GM12878 (cell line): ENCODE measurements at regions of chr12 and their contacts with region 1.

Region 1: DNA sequence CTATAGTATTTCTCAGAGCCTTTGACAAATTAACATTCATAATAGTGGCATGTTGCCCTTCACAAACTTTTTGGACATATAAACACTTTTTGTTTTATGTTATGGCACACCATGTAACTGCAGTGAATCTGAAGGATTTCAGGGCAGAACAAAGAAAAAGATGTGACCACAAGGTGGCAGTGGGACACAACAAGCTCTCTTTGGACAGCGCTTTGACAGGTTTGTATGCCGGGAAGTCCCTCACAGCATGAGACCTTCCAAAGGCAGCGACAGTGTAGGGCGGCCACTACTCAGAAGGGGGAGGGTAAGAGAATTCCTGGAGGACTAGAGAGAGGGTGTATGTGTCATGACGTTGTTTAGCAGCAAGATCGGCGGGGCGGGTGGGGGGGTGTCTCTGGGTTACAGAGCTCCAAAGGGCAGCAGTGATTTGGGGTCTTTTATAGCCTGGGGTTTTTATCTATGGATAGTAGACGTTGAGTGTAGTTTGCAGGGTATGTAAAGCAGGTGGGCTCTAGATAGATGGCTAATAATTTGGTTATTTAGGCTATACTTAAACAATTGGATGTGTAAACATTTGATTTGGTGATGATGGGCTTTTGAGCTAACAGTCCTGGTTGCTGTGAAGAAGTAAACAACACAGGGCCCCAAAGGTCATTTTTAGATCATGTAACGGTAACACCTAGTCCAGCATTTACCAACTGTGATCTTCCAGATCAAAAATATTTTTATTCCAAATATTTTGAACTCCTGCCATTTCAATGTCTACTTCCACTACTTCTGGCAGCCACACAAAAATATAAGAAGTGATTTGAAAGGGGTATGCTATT is 22.9 kb downstream of the ETFBKMT start:
- DNase-seq: peak; percentile 95
- ATAC-seq: peak; percentile 95
- H3K4me3 ChIP-seq: no peak overlapping the region
- H3K27ac ChIP-seq: no peak overlapping the region; the same call in 1 of the 2 replicates
- H3K4me1 ChIP-seq: peaks cover 3% of the 10 kb centered on the region; the same call in 1 of the 2 replicates
- H3K27me3 ChIP-seq: no peaks in the 10 kb centered on the region
- CTCF ChIP-seq: peak; percentile 77 to 93 (median 86)
- EP300 ChIP-seq: no peak
- POLR2A ChIP-seq: no peak
- RAD21 ChIP-seq: peak; percentile 100

Region 2: GRCh38 chr12:31527083-31527482 is 155.3 kb before region 1 on chr12:
- CTCF ChIA-PET with region 1: no interaction called
- POLR2A ChIA-PET with region 1: no interaction called
- RAD21 ChIA-PET with region 1: no interaction called
- SMC1A ChIA-PET with region 1: no interaction called
- in situ Hi-C with region 1: no loop called
- intact Hi-C with region 1: no loop called
- DNase-seq: no peak
- ATAC-seq: no peak
- H3K4me3 ChIP-seq: no peak overlapping the region
- H3K27ac ChIP-seq: no peak overlapping the region
- H3K4me1 ChIP-seq: peaks cover 27% of the 10 kb centered on the region
- H3K27me3 ChIP-seq: no peaks in the 10 kb centered on the region
- CTCF ChIP-seq: no peak
- EP300 ChIP-seq: no peak
- POLR2A ChIP-seq: no peak
- RAD21 ChIP-seq: no peak

Region 3: GRCh38 chr12:31715283-31715825 is 33.0 kb after region 1 on chr12:
- CTCF ChIA-PET with region 1: interaction called, 12 read pairs
- POLR2A ChIA-PET with region 1: interaction called, 3 read pairs
- RAD21 ChIA-PET with region 1: interaction called, 27 read pairs
- SMC1A ChIA-PET with region 1: interaction called, 20 read pairs
- in situ Hi-C with region 1: no loop called
- intact Hi-C with region 1: no loop called
- DNase-seq: peak; percentile 77
- ATAC-seq: peak; percentile 95
- H3K4me3 ChIP-seq: peak overlapping the region; percentile 54; the same call in 1 of the 2 replicates
- H3K27ac ChIP-seq: peak overlapping the region; percentile 90
- H3K4me1 ChIP-seq: peaks cover 10% of the 10 kb centered on the region
- H3K27me3 ChIP-seq: no peaks in the 10 kb centered on the region
- CTCF ChIP-seq: no peak
- EP300 ChIP-seq: peak in 1 of 2 experiments; percentile 35; a peak in 1 of 4 replicates
- POLR2A ChIP-seq: no peak
- RAD21 ChIP-seq: peak; percentile 13

Region 4: GRCh38 chr12:31742891-31743290 is 60.5 kb after region 1 on chr12:
- CTCF ChIA-PET with region 1: interaction called, 4 read pairs
- POLR2A ChIA-PET with region 1: interaction called, 4 read pairs
- RAD21 ChIA-PET with region 1: interaction called, 15 read pairs
- SMC1A ChIA-PET with region 1: interaction called, 7 read pairs
- in situ Hi-C with region 1: no loop called
- intact Hi-C with region 1: loop called (anchors 2 kb)
- DNase-seq: no peak
- ATAC-seq: no peak; the same call in 2 of the 3 replicates
- H3K4me3 ChIP-seq: no peak overlapping the region
- H3K27ac ChIP-seq: no peak overlapping the region
- H3K4me1 ChIP-seq: peaks cover 27% of the 10 kb centered on the region
- H3K27me3 ChIP-seq: no peaks in the 10 kb centered on the region
- CTCF ChIP-seq: no peak
- EP300 ChIP-seq: no peak
- POLR2A ChIP-seq: no peak
- RAD21 ChIP-seq: no peak

Region 5: DNA sequence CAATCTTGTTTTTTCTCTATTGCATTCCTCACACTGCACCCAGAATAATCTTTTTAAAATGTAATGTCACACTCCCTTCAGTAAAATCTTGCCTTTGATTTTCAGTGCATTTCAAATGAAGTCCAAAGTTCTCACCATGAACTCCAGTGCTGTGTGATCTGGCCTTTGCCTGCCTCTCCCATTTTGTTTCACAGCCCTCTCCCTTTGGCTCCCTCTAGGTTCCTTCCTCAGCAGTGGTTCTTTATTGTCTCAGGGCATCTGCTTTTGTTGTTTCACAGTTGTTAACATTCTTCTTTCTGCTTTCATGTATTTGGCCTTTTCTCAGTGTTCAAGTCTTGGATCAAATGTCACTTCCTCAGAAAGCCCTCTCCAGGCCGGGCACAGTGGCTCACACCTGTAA is 131.0 kb after region 1 on chr12:
- CTCF ChIA-PET with region 1: interaction called, 4 read pairs
- POLR2A ChIA-PET with region 1: interaction called, 6 read pairs
- RAD21 ChIA-PET with region 1: interaction called, 15 read pairs
- SMC1A ChIA-PET with region 1: interaction called, 9 read pairs
- in situ Hi-C with region 1: loop called (anchors 5 kb)
- intact Hi-C with region 1: loop called (anchors 2 kb)
- DNase-seq: no peak
- ATAC-seq: no peak
- H3K4me3 ChIP-seq: no peak overlapping the region
- H3K27ac ChIP-seq: no peak overlapping the region
- H3K4me1 ChIP-seq: peaks cover 22% of the 10 kb centered on the region
- H3K27me3 ChIP-seq: no peaks in the 10 kb centered on the region
- CTCF ChIP-seq: peak in 2 of 3 experiments; percentile 15 to 18; a peak in 1 of 6 replicates
- EP300 ChIP-seq: no peak
- POLR2A ChIP-seq: no peak
- RAD21 ChIP-seq: peak; percentile 37; the same call in 1 of the 2 replicates

Region 6: DNA sequence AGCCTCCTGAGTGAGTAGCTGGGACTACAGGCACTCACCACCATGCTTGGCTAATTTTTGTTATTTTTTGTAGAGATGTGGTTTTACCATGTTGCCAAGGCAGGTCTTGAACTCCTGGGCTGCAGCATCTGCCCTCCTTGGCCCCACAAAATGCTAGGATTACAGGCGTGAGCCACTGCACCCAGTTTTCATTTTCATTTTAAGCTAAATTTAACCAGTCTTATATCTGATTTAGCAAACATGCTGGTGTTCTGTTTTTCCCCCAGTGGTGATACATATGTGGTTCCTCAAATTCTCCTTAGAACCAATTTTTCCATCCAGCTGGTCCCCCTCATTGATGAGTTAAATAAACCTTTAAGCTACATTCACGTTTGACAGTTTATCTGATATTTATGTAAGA is 380.5 kb after region 1 on chr12:
- CTCF ChIA-PET with region 1: interaction called, 12 read pairs
- POLR2A ChIA-PET with region 1: no interaction called
- RAD21 ChIA-PET with region 1: interaction called, 10 read pairs
- SMC1A ChIA-PET with region 1: interaction called, 14 read pairs
- in situ Hi-C with region 1: no loop called
- intact Hi-C with region 1: loop called (anchors 1 kb)
- DNase-seq: no peak
- ATAC-seq: peak; percentile 45
- H3K4me3 ChIP-seq: no peak overlapping the region
- H3K27ac ChIP-seq: no peak overlapping the region
- H3K4me1 ChIP-seq: peaks cover 2% of the 10 kb centered on the region; the same call in 1 of the 2 replicates
- H3K27me3 ChIP-seq: no peaks in the 10 kb centered on the region
- CTCF ChIP-seq: 0 out of 6 replicates have a peak, but pooled peaks of 1 of the 3 experiments have one; percentile 3
- EP300 ChIP-seq: no peak
- POLR2A ChIP-seq: no peak
- RAD21 ChIP-seq: no peak

Region 7: DNA sequence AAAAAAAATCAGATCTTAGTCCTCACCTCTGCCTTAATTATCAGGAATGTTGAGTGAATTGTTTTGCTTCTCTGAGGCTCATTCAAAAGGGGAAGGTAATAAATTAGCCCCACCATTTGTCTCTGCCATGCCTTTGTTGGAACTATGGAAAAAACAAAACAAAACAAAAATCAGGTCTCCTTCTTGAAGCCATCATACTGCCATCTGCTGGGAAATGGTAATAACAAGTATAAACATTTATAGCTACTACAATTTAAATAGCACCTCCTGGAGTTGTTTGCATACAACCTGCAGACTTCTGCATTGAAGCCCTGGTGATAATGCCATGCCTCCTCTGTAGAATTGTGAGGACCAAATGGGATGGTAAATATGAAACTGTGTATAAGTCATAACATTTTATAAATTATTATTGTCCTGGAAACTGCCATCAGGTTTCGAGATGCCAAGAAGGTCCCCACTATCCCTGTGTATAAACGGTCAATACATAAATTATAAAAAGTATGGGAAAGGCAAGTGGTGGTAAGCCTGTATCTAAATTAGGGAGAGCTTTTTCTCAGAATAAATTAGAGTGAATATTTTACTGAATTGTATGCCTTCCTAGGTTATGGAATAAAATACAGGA is 629.8 kb after region 1 on chr12:
- CTCF ChIA-PET with region 1: interaction called, 25 read pairs
- POLR2A ChIA-PET with region 1: no interaction called
- RAD21 ChIA-PET with region 1: interaction called, 19 read pairs
- SMC1A ChIA-PET with region 1: interaction called, 15 read pairs
- in situ Hi-C with region 1: no loop called
- intact Hi-C with region 1: no loop called
- DNase-seq: peak; percentile 21
- ATAC-seq: peak; percentile 77
- H3K4me3 ChIP-seq: no peak overlapping the region
- H3K27ac ChIP-seq: no peak overlapping the region
- H3K4me1 ChIP-seq: no peaks in the 10 kb centered on the region
- H3K27me3 ChIP-seq: no peaks in the 10 kb centered on the region
- CTCF ChIP-seq: peak; percentile 39 to 63 (median 56); a peak in 5 of 6 replicates
- EP300 ChIP-seq: no peak
- POLR2A ChIP-seq: no peak
- RAD21 ChIP-seq: peak; percentile 62

Region 8: GRCh38 chr12:33349791-33350190 is 1667.4 kb after region 1 on chr12:
- CTCF ChIA-PET with region 1: no interaction called
- POLR2A ChIA-PET with region 1: no interaction called
- RAD21 ChIA-PET with region 1: no interaction called
- SMC1A ChIA-PET with region 1: no interaction called
- in situ Hi-C with region 1: no loop called
- intact Hi-C with region 1: no loop called
- DNase-seq: no peak
- ATAC-seq: no peak
- H3K4me3 ChIP-seq: no peak overlapping the region
- H3K27ac ChIP-seq: no peak overlapping the region
- H3K4me1 ChIP-seq: no peaks in the 10 kb centered on the region
- H3K27me3 ChIP-seq: no peaks in the 10 kb centered on the region
- CTCF ChIP-seq: no peak
- EP300 ChIP-seq: no peak
- POLR2A ChIP-seq: no peak
- RAD21 ChIP-seq: no peak